Activated naive CD4-positive, alpha-beta T cell treated with anti-CD3 and anti-CD28 coated beads, Interleukin-2, amount 10 ng/mL, durations not matched to agents 7 days and 5 days (primary cell): ENCODE measurements at regions of chr3 and their contacts with region 1.

Region 1: DNA sequence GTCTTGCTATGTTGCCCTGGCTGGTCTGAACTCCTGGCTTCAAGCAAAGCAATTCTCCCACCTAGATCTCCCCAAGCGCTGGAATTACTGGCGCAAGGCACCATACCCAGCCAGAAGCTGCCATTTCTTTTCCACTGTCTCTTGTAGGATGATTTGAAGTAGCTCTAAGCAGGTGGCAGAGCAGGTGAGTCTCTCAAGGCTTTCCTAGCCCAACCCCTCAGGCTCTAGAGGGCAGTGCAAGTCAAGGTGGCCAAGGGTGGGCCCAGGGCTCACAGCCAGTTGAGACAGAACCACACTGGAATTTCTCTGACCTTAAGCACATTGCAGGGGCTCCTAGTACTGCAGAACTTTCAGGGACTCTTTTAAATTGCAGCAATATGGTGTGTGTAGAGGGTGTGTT is 15.6 kb upstream of the DAG1 start:
- DNase-seq: no peak
- H3K4me3 Mint-ChIP-seq: no peak overlapping the region
- H3K27ac Mint-ChIP-seq: no peak overlapping the region
- H3K4me1 Mint-ChIP-seq: no peaks in the 10 kb centered on the region
- H3K27me3 Mint-ChIP-seq: peaks cover 31% of the 10 kb centered on the region

Region 2: DNA sequence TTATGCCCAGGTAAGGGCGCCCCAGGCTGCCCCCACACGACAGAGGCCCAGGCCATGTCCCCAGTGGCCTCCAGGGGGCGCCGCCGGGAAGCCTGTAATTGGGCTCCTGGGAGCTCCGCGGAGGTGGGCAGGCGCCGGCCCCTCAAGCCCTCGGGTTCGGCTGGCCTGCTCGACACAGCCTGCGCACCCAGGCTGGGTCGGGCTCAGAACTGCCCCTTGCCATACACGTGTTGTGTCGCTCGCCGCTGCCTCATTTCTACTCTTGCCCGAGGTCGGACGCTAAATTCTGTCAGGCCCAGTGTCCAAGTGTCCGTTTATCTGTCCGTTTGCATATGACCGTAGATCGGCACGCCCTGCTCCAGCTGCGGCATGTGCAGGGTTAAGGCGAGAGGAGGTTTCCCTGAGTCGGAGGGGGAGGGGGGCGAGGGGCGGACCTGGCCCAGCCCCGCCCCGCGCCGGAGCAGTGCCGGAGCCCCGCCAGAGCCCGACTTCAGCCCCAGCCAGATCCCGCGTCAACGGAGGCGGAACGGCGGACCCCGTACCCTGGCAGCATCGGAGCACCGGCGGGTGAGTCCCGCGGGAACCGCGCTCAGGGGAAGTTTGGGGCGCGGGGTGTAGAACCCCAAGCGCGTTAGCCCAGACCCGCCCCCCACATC is 283.2 kb before region 1 on chr3 and contains the start of gene KLHDC8B:
- CTCF ChIA-PET with region 1: interaction called, 14 read pairs
- DNase-seq: peak; percentile 88
- H3K4me3 Mint-ChIP-seq: peak within 1 kb of the TSS; percentile 77
- H3K27ac Mint-ChIP-seq: no peak within 1 kb of the TSS
- H3K4me1 Mint-ChIP-seq: peaks cover 17% of the 10 kb centered on the region
- H3K27me3 Mint-ChIP-seq: peaks cover 21% of the 10 kb centered on the region

Region 3: DNA sequence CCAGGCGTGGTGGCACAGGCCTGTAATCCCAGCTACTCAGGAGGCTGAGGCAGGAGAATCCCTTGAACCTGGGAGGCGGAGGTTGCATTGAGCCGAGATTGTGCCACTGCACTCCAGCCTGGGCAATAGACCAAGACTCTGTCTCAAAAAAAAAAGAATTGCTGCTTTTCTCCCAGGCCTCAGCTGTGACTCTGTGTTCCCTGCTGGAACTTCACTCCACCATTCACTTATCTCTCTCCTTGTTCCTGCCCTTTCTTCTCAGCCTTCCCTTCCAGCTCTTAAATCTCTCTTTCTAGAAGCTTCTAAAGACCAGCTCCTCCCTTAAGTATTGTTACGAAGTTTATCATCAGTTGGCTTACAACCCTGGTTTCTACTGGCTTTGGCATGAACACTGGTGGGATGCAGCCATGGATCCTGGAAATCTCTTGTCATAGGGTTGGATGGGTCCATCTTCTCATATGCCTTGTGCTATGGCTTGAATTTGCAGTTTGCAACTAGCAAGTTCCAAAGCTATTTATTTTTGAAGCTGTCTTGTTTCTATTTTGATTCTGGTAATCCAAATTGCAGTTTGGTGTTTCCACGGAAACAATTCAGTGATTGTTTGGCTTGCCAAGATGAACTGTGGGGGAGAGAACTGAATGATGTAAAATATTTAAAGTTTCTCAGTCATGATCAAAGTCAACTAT is 187.9 kb before region 1 on chr3:
- CTCF ChIA-PET with region 1: no interaction called
- DNase-seq: no peak
- H3K4me3 Mint-ChIP-seq: no peak overlapping the region
- H3K27ac Mint-ChIP-seq: no peak overlapping the region
- H3K4me1 Mint-ChIP-seq: no peaks in the 10 kb centered on the region
- H3K27me3 Mint-ChIP-seq: no peaks in the 10 kb centered on the region